CD8-positive, alpha-beta T cell (primary cell): ENCODE measurements at regions of chr19 and their contacts with region 1.

Region 1: GRCh38 chr19:18281082-18282020 is at the start of gene JUND:
- DNase-seq: peak; percentile 95 to 100 (median 98)
- ATAC-seq: peak; percentile 63
- H3K4me3 ChIP-seq: peak within 1 kb of the TSS; percentile 97 to 98
- H3K4me3 Mint-ChIP-seq: peak within 1 kb of the TSS; percentile 97
- H3K27ac ChIP-seq: peak within 1 kb of the TSS; percentile 99 to 100
- H3K27ac Mint-ChIP-seq: peak within 1 kb of the TSS; percentile 98
- H3K4me1 ChIP-seq: peaks cover 39% of the 10 kb centered on the region
- H3K4me1 Mint-ChIP-seq: peaks cover 47% of the 10 kb centered on the region
- H3K27me3 ChIP-seq: no peaks in the 10 kb centered on the region
- H3K27me3 Mint-ChIP-seq: no peaks in the 10 kb centered on the region
- CTCF ChIP-seq: no peak
- total RNA-seq, gene JUND: 1,995 to 2,125 TPM

Region 2: DNA sequence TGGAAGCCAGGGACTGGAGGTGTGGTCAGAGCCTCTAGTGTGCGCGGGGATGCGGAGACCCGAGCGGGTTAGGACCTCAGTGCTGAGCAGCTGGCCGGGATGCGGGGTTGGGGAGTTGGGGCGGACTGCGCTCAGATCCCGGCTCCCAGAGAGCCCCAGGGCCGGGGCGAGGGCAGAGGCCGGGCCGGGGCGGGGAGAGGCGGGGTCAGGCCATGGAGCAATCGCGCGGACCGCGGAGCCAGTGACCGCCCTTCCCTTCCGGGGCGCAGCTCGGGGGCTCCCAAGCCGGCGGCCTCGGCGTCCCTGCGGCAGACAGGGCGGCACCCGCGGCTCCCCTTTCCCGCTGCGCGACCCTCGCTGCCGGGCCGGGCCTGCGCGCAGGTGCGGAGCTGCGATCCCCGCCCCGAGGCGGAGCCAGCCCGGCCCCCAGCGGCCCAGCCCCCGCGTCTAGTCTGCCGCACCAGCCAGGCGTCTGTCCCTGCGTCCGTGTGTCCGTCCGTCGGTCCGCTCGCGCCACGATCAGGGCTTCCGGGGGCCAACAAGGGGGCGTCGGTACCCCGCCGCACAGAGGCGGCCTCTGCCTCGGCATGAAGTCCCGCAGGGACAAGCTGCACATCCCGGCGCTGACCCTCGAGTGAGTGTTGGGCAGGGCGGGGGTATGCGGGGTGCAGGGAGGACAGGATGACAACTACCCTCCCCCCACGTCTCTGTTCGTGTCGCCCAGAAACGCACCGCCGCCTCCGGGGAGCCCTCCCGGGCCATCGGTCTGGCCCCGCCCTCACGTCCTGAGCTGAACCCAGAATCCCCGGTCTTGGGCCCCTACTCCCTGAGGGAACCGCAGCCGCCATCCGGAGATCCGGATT is 171.4 kb before region 1 on chr19:
- CTCF ChIA-PET with region 1: interaction called, 4 read pairs
- POLR2A ChIA-PET with region 1: interaction called, 12 read pairs
- intact Hi-C with region 1: no loop called
- DNase-seq: peak in 6 of 9 experiments; percentile 48 to 72 (median 58)
- ATAC-seq: peak; percentile 79
- H3K4me3 ChIP-seq: peak overlapping the region; percentile 74
- H3K4me3 Mint-ChIP-seq: peak overlapping the region; percentile 82
- H3K27ac ChIP-seq: peak overlapping the region; percentile 41 to 53
- H3K27ac Mint-ChIP-seq: peak overlapping the region; percentile 86
- H3K4me1 ChIP-seq: peaks cover 21% of the 10 kb centered on the region
- H3K4me1 Mint-ChIP-seq: peaks cover 18% of the 10 kb centered on the region
- H3K27me3 ChIP-seq: no peaks in the 10 kb centered on the region
- H3K27me3 Mint-ChIP-seq: no peaks in the 10 kb centered on the region
- CTCF ChIP-seq: no peak

Region 3: DNA sequence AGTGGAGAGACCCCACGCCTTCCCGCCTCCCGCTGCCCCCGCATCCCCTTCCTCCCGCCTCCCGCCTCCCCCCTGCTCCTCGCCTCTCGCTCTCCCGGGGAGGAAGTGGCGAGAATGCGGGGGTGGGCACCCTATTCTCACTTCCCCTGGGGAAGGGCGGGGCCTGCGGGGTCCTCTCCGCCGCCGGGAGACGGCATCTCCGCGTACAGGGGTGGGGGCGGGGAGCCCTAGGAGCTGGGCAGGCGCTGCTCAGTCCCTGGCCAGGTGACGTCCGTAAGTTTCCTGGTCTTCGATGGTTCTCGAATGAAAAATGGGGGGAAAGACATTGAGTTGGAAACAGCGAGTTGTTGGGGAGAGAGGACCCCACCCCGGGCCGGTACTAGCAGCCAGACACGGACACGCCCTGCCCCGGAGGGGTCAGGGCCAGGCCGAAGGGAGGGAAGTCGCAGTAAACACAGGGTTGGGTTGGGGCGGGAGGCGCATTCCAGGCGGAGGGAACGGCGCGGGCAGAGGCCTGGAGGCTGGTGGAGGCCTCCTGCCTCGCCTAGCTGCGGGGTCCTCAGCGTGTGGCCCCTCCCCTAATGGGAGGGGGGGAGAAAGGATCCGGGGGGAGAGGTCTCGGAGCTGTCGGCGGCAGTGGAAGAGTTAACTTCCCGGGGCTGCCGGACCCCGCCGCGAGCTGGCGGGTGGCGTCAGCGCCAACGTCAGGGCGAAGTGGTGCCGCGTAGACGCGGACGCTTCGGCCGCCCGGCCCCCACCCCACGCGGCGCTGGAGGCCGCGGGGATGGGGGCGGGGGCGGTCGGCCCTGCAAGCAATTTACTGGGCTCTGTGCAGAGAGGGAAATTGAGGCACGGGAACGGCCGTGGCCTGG is 10.5 kb after region 1 on chr19:
- CTCF ChIA-PET with region 1: interaction called, 34 read pairs
- POLR2A ChIA-PET with region 1: interaction called, 146 read pairs
- intact Hi-C with region 1: loop called (anchors 1 kb)
- DNase-seq: peak; percentile 66 to 93 (median 82)
- ATAC-seq: peak; percentile 45
- H3K4me3 ChIP-seq: peak overlapping the region; percentile 71 to 91
- H3K4me3 Mint-ChIP-seq: peak overlapping the region; percentile 86
- H3K27ac ChIP-seq: peak overlapping the region; percentile 93 to 100
- H3K27ac Mint-ChIP-seq: peak overlapping the region; percentile 95
- H3K4me1 ChIP-seq: peaks cover 54% of the 10 kb centered on the region
- H3K4me1 Mint-ChIP-seq: peaks cover 55% of the 10 kb centered on the region
- H3K27me3 ChIP-seq: no peaks in the 10 kb centered on the region
- H3K27me3 Mint-ChIP-seq: no peaks in the 10 kb centered on the region
- CTCF ChIP-seq: no peak

Region 4: DNA sequence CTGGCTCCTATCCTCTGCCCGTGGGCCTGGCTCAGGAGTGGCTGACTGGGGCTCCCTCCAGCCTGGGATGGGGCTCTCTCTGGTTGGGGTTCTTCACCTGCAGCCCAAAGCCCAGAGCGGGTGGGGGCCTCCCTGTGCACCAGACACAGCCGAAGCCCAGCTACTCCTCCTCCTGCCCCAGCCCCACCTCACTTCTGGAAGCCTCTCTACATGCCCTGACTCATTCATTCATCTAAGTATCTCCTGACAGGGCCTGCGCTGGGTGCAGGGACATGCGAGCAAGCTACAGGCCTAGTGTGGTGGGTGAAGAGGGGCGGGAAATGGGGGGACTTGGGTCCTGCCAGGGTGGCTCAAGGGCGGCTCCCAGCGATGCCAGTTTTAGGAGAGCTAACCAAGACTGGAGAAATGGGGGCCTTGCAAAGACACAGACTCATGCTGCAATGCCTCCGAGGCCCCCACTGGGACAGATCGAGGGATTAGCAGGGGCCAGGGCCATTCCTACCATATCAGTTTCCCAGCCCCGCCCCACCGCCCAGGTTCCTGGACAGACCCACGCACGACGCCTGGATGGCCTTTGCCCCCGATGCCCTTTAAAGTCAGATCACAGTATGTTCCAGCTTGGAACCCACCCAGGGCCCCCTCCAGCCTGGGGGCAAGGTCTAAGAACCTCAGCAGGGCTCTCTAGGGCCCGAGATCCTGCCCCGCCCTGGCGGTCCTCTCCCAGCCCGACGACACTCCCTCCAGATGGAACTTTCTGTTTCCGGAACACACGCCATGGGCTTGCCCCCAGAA is 29.0 kb after region 1 on chr19:
- CTCF ChIA-PET with region 1: interaction called, 256 read pairs
- POLR2A ChIA-PET with region 1: interaction called, 207 read pairs
- intact Hi-C with region 1: no loop called
- DNase-seq: no peak
- ATAC-seq: no peak
- H3K4me3 ChIP-seq: no peak overlapping the region
- H3K4me3 Mint-ChIP-seq: no peak overlapping the region
- H3K27ac ChIP-seq: no peak overlapping the region
- H3K27ac Mint-ChIP-seq: no peak overlapping the region
- H3K4me1 ChIP-seq: peaks cover 38% of the 10 kb centered on the region
- H3K4me1 Mint-ChIP-seq: peaks cover 31% of the 10 kb centered on the region
- H3K27me3 ChIP-seq: no peaks in the 10 kb centered on the region
- H3K27me3 Mint-ChIP-seq: no peaks in the 10 kb centered on the region
- CTCF ChIP-seq: no peak

Region 5: DNA sequence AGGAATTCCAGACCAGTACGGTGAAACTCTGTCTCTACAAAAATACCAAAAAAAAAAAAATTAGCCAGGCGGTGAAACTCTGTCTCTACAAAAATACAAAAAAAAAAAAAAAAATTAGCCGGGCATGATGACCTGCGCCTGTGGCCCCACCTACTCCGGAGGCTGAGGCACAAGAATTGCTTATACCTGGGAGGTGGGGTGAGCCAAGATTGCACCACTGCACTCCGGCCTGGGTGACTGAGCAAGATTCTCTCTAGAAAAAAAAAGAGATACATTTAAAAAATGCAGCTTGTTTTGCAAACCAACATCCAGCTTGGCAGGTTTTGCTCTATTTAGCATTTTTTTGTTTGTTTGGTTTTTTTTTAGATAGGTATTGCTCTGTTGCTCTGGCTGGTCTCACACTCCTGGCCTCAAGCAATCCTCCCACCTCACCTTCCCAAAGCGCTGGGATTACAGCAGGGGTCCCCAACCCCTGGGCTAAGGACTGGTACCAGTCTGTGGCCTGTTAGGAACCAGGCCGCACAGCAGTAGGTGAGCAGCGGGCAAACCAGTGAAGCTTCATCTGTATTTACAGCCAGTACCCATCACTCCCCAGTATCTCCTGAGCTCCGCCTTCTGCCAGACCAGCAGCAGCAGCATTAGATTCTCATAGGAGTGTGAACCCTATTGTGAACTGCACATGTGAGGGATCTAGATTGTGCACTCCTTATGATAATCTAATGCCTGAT is 52.5 kb after region 1 on chr19:
- CTCF ChIA-PET with region 1: interaction called, 318 read pairs
- POLR2A ChIA-PET with region 1: interaction called, 156 read pairs
- intact Hi-C with region 1: no loop called
- DNase-seq: no peak
- ATAC-seq: no peak
- H3K4me3 ChIP-seq: no peak overlapping the region
- H3K4me3 Mint-ChIP-seq: no peak overlapping the region
- H3K27ac ChIP-seq: no peak overlapping the region
- H3K27ac Mint-ChIP-seq: no peak overlapping the region
- H3K4me1 ChIP-seq: peaks cover 3% of the 10 kb centered on the region
- H3K4me1 Mint-ChIP-seq: peaks cover 4% of the 10 kb centered on the region
- H3K27me3 ChIP-seq: no peaks in the 10 kb centered on the region
- H3K27me3 Mint-ChIP-seq: no peaks in the 10 kb centered on the region
- CTCF ChIP-seq: no peak

Region 6: DNA sequence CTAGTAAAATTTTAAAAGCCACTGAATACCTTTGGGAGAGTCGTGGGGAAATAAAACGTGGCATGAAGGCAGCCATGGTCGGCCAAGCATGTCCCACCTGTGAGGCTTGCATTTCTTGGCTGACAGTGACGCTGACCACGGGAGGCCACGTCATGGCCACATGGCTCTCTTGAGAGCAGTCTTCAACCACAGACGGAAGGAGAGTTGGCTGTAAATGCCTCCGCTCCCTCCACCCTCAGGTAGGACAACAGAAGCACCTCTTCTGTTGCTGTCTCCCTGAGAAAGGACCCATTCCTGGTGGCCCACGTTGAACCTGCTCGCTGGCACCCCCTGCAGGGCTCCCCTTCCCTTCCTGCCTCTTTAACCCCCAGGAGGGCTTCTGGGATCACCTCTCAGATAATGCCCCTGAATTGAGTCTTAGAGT is 126.7 kb after region 1 on chr19:
- CTCF ChIA-PET with region 1: interaction called, 21 read pairs
- POLR2A ChIA-PET with region 1: no interaction called
- intact Hi-C with region 1: loop called in 1 of 2 experiments (anchors 1 kb)
- DNase-seq: peak in 2 of 9 experiments; percentile 33 to 40
- ATAC-seq: no peak
- H3K4me3 ChIP-seq: no peak overlapping the region
- H3K4me3 Mint-ChIP-seq: no peak overlapping the region
- H3K27ac ChIP-seq: no peak overlapping the region
- H3K27ac Mint-ChIP-seq: no peak overlapping the region
- H3K4me1 ChIP-seq: no peaks in the 10 kb centered on the region
- H3K4me1 Mint-ChIP-seq: peaks cover 2% of the 10 kb centered on the region
- H3K27me3 ChIP-seq: no peaks in the 10 kb centered on the region
- H3K27me3 Mint-ChIP-seq: peaks cover 2% of the 10 kb centered on the region
- CTCF ChIP-seq: peak; percentile 20